Activated CD4-positive, alpha-beta T cell treated with anti-CD3 and anti-CD28 coated beads for 36 hours (primary cell): ENCODE measurements at regions of chr14 and their contacts with region 1.

Region 1: DNA sequence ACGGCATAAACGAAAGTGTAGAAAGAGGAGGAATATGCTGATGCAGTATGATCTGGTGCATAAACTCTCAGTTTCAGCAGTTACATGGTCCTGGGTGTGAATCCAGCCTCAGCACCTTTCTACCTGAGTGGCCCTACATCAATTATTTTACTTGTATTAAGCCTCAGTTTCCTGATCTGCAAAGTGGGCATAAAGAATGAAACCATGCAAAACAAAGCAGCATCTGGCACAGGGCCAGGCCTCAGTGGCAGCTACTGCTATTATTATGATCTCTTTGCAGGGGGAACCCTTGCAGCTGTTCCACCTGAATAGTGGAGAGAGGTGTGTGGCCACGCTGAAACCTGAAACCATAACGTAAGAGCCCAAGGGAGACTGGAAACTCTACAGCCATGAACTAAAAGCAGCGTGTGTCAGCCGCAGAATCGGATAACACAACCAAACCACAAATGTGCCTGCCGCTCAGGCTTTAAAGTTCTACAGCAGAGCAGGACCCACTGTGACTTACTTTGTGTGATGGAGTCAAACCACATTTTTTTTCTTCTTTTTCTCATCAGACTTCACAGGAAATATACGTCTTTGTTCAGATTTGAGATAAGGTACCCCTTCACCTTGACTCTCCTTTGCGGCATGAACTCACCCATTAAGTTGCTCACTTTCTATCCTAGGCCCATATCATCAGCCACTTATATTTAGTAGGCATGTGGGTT is 29.2 kb upstream of the FOS start:
- DNase-seq: peak; percentile 91
- ATAC-seq: peak; percentile 81
- H3K4me3 Mint-ChIP-seq: peak overlapping the region; percentile 11
- H3K27ac Mint-ChIP-seq: peak overlapping the region; percentile 82
- H3K4me1 Mint-ChIP-seq: peaks cover 57% of the 10 kb centered on the region
- H3K27me3 Mint-ChIP-seq: peaks cover 2% of the 10 kb centered on the region

Region 2: GRCh38 chr14:75126679-75127473 is 122.5 kb before region 1 on chr14 and contains the start of gene NEK9:
- CTCF ChIA-PET with region 1: interaction called, 3 read pairs
- POLR2A ChIA-PET with region 1: no interaction called
- intact Hi-C with region 1: loop called (anchors 2 to 5 kb)
- DNase-seq: peak; percentile 94
- ATAC-seq: peak; percentile 90
- H3K4me3 Mint-ChIP-seq: peak within 1 kb of the TSS; percentile 97
- H3K27ac Mint-ChIP-seq: peak within 1 kb of the TSS; percentile 98
- H3K4me1 Mint-ChIP-seq: peaks cover 41% of the 10 kb centered on the region
- H3K27me3 Mint-ChIP-seq: no peaks in the 10 kb centered on the region
- total RNA-seq, gene NEK9: 45.2 to 58.7 TPM

Region 3: GRCh38 chr14:75230140-75231045 is 19.0 kb before region 1 on chr14:
- CTCF ChIA-PET with region 1: interaction called, 4 read pairs
- POLR2A ChIA-PET with region 1: no interaction called
- intact Hi-C with region 1: loop called (anchors 1 to 2 kb)
- DNase-seq: peak; percentile 64
- ATAC-seq: peak; percentile 79
- H3K4me3 Mint-ChIP-seq: no peak overlapping the region
- H3K27ac Mint-ChIP-seq: peak overlapping the region; percentile 1
- H3K4me1 Mint-ChIP-seq: peaks cover 60% of the 10 kb centered on the region
- H3K27me3 Mint-ChIP-seq: no peaks in the 10 kb centered on the region

Region 4: DNA sequence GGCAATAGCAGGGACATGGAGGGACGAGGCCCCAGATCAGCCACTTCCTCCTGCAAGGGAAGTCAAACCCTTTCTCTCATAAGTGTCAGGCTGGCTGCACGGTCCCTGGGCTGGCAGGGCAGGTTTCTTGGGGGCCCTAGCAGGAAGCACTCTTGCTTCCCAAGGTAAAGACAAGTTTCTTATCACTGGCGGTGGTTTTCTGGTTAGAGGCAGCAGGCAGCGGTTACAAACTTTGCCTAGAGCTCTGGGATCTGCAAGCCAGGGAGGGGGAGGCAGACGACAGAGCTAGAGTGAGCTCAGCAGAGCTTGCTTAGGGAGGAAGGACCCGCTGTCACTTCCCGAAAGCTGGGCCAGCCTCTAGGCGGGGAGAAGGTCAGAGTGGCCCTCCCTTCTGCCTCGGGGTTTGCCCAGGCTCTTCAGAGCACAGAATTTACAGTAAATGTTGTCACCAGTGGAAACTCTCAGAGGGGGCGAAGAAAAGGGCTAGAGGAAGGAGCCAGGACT is 293.2 kb after region 1 on chr14:
- CTCF ChIA-PET with region 1: interaction called, 4 read pairs
- POLR2A ChIA-PET with region 1: interaction called, 4 read pairs
- intact Hi-C with region 1: loop called in 1 of 2 experiments (anchors 2 kb)
- DNase-seq: peak; percentile 95
- ATAC-seq: peak; percentile 86
- H3K4me3 Mint-ChIP-seq: peak overlapping the region; percentile 59
- H3K27ac Mint-ChIP-seq: peak overlapping the region; percentile 98
- H3K4me1 Mint-ChIP-seq: peaks cover 85% of the 10 kb centered on the region
- H3K27me3 Mint-ChIP-seq: no peaks in the 10 kb centered on the region